WTC11 (cell line): ENCODE measurements at regions of chr15 and their contacts with region 1.

Region 1: GRCh38 chr15:41904541-41905005 is 10.7 kb upstream of the SPTBN5 start:
- DNase-seq: peak; percentile 81
- ATAC-seq: peak; percentile 91
- H3K4me3 Mint-ChIP-seq: no peak overlapping the region
- H3K27ac Mint-ChIP-seq: peak overlapping the region; percentile 86
- H3K4me1 Mint-ChIP-seq: peaks cover 7% of the 10 kb centered on the region
- H3K27me3 Mint-ChIP-seq: no peaks in the 10 kb centered on the region
- CTCF ChIP-seq: peak; percentile 63

Region 2: GRCh38 chr15:41603941-41604911 is 300.3 kb before region 1 on chr15:
- CTCF ChIA-PET with region 1: interaction called, 11 read pairs
- POLR2A ChIA-PET with region 1: no interaction called
- DNase-seq: peak; percentile 79
- ATAC-seq: peak; percentile 98
- H3K4me3 Mint-ChIP-seq: peak overlapping the region; percentile 46
- H3K27ac Mint-ChIP-seq: no peak overlapping the region; the same call in 1 of the 2 replicates
- H3K4me1 Mint-ChIP-seq: peaks cover 7% of the 10 kb centered on the region
- H3K27me3 Mint-ChIP-seq: no peaks in the 10 kb centered on the region; the same call in 1 of the 2 replicates
- CTCF ChIP-seq: peak; percentile 63

Region 3: GRCh38 chr15:41746802-41747201 is 157.8 kb before region 1 on chr15:
- CTCF ChIA-PET with region 1: no interaction called
- POLR2A ChIA-PET with region 1: no interaction called
- DNase-seq: no peak
- ATAC-seq: no peak
- H3K4me3 Mint-ChIP-seq: no peak overlapping the region
- H3K27ac Mint-ChIP-seq: no peak overlapping the region
- H3K4me1 Mint-ChIP-seq: no peaks in the 10 kb centered on the region
- H3K27me3 Mint-ChIP-seq: no peaks in the 10 kb centered on the region
- CTCF ChIP-seq: no peak

Region 4: GRCh38 chr15:41811432-41812195 is 93.0 kb before region 1 on chr15:
- CTCF ChIA-PET with region 1: interaction called, 30 read pairs
- POLR2A ChIA-PET with region 1: no interaction called
- DNase-seq: peak; percentile 89
- ATAC-seq: peak; percentile 88
- H3K4me3 Mint-ChIP-seq: no peak overlapping the region
- H3K27ac Mint-ChIP-seq: no peak overlapping the region
- H3K4me1 Mint-ChIP-seq: peaks cover 6% of the 10 kb centered on the region
- H3K27me3 Mint-ChIP-seq: no peaks in the 10 kb centered on the region
- CTCF ChIP-seq: peak; percentile 37; the same call in 1 of the 2 replicates

Region 5: GRCh38 chr15:41849861-41850260 is 54.7 kb before region 1 on chr15:
- CTCF ChIA-PET with region 1: interaction called, 37 read pairs
- POLR2A ChIA-PET with region 1: no interaction called
- DNase-seq: no peak
- ATAC-seq: no peak
- H3K4me3 Mint-ChIP-seq: no peak overlapping the region
- H3K27ac Mint-ChIP-seq: no peak overlapping the region
- H3K4me1 Mint-ChIP-seq: no peaks in the 10 kb centered on the region
- H3K27me3 Mint-ChIP-seq: no peaks in the 10 kb centered on the region
- CTCF ChIP-seq: no peak

Region 6: DNA sequence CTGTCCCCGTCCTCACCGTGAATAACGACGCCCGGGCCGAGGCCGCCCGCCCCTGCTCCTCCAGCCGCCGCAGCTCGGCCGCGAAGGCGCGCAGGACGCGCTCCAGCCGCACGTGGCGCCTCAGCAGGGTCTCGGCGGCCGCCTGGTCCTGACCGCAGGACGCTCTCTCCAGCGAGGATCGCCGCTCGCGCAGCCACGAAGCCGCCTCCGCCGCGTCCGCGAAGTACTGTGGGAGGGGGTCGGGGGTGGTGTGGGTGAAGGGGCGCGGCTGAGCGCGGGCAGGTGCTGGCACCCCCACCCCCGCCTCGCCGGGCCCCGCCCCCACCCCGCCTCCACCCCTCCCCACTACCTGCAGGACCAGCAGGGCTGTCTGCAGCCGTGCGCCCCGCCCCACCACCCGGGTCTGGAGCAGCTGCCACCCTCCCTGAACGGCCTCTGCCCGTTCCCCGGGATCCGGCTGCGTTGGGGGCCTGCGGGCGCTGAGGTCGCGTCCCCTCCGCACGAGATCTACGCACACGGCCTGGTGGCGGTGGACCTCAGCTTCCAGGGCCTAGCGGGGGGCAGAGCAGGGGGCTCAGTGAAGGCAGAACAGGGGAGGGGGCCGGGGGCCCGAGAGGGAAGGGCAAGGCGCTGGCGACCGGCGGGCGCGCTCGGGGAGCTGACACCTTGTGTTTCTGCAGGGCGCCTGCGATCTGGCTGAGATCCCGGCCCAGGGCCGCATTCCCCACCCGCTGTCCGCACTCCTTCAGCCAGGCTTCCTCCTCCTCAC is 22.5 kb before region 1 on chr15:
- CTCF ChIA-PET with region 1: interaction called, 14 read pairs
- POLR2A ChIA-PET with region 1: no interaction called
- DNase-seq: peak; percentile 61
- ATAC-seq: peak; percentile 67
- H3K4me3 Mint-ChIP-seq: peak overlapping the region; percentile 40
- H3K27ac Mint-ChIP-seq: no peak overlapping the region
- H3K4me1 Mint-ChIP-seq: peaks cover 8% of the 10 kb centered on the region
- H3K27me3 Mint-ChIP-seq: peaks cover 33% of the 10 kb centered on the region
- CTCF ChIP-seq: no peak

Region 7: GRCh38 chr15:41972253-41973242 is 68.0 kb after region 1 on chr15 and contains the start of gene EHD4:
- CTCF ChIA-PET with region 1: interaction called, 18 read pairs
- POLR2A ChIA-PET with region 1: no interaction called
- DNase-seq: peak; percentile 97
- ATAC-seq: peak; percentile 93
- H3K4me3 Mint-ChIP-seq: peak within 1 kb of the TSS; percentile 85
- H3K27ac Mint-ChIP-seq: peak within 1 kb of the TSS; percentile 89
- H3K4me1 Mint-ChIP-seq: peaks cover 29% of the 10 kb centered on the region
- H3K27me3 Mint-ChIP-seq: no peaks in the 10 kb centered on the region; the same call in 1 of the 2 replicates
- CTCF ChIP-seq: no peak
- total RNA-seq, gene EHD4: 20.8 to 23.9 TPM (median 21.3 TPM) in 3 replicates